ENCODE measurements at regions of chr22 and their contacts with region 1.

Region 1: GRCh38 chr22:37538590-37539357 is 19.6 kb upstream of the CARD10 start:
- DNase-seq: peak; percentile 99

Region 2: GRCh38 chr22:37561212-37562048 is 22.7 kb after region 1 on chr22:
- CTCF ChIA-PET with region 1: interaction called, 32 read pairs
- POLR2A ChIA-PET with region 1: interaction called, 9 read pairs
- DNase-seq: peak; percentile 94

Region 3: GRCh38 chr22:37566903-37567820 is 28.4 kb after region 1 on chr22:
- CTCF ChIA-PET with region 1: interaction called, 32 read pairs
- POLR2A ChIA-PET with region 1: interaction called, 9 read pairs
- DNase-seq: peak; percentile 79

Region 4: DNA sequence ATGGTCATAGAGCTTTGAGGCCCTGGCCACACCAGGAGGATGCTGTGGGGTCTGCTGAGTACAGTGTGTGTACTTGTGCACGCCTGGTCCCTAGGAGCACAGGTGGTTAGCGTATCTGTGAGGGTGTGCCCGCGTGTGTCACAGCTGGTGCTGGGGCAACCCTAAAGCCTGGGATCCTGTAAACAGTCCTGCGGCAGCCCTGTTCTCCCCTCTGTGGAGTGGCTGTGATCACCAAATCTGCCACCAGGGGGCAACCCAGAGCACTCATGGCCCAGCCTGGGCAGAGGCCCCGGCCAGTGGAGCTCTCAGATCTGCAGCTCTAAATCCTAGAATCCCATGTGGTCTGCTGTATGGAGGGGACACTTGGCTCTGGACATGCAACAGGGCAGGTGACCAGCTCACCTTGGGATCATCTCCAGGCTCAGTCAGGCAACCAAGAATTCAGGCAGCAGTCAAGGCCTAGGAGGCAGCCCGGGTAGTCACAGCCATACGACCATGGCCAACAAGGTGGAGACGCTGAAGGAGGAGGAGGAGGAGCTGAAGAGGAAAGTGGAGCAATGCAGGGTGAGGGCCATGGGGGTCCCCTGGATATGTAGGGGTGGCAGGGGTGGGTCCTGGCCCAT is 104.6 kb after region 1 on chr22:
- CTCF ChIA-PET with region 1: interaction called, 10 read pairs
- POLR2A ChIA-PET with region 1: no interaction called
- DNase-seq: peak; percentile 93